ENCODE measurements at regions of chr7 and their contacts with region 1.

Region 1: GRCh38 chr7:116236020-116236630 is 25.8 kb downstream of the TES start:
- DNase-seq: peak; percentile 28 to 81 (median 50)
- ATAC-seq: peak; percentile 79
- H3K4me3 ChIP-seq: no peak overlapping the region
- H3K4me3 Mint-ChIP-seq: no peak overlapping the region
- H3K27ac ChIP-seq: no peak overlapping the region
- H3K27ac Mint-ChIP-seq: peak overlapping the region; percentile 65
- H3K4me1 ChIP-seq: peaks cover 16% of the 10 kb centered on the region
- H3K4me1 Mint-ChIP-seq: peaks cover 94% of the 10 kb centered on the region
- H3K27me3 ChIP-seq: no peaks in the 10 kb centered on the region
- H3K27me3 Mint-ChIP-seq: no peaks in the 10 kb centered on the region
- CTCF ChIP-seq: peak; percentile 82

Region 2: GRCh38 chr7:115952832-115953231 is 283.3 kb before region 1 on chr7:
- CTCF ChIA-PET with region 1: no interaction called
- POLR2A ChIA-PET with region 1: no interaction called
- intact Hi-C with region 1: no loop called
- DNase-seq: no peak
- ATAC-seq: no peak
- H3K4me3 ChIP-seq: no peak overlapping the region
- H3K4me3 Mint-ChIP-seq: no peak overlapping the region
- H3K27ac ChIP-seq: no peak overlapping the region
- H3K27ac Mint-ChIP-seq: no peak overlapping the region
- H3K4me1 ChIP-seq: no peaks in the 10 kb centered on the region
- H3K4me1 Mint-ChIP-seq: no peaks in the 10 kb centered on the region
- H3K27me3 ChIP-seq: no peaks in the 10 kb centered on the region
- H3K27me3 Mint-ChIP-seq: no peaks in the 10 kb centered on the region
- CTCF ChIP-seq: no peak

Region 3: DNA sequence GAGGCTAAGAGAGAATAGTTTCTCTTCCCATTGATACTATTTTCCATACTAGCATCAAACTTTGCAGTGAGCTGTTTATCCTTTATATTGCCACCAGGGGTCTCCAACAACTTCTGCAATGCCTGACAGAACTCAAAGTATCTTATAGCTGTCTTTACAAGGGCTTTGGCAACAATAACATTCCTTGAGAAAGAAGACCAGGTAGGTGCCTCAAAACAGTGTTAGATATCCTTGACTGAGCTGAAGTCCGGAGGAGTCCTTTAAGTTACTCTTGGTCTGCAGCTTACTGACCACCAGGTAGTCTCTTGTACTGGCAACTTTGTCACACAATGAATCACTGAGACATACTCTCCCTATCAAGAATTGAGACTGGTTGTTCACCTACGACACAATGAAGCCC is 55.8 kb before region 1 on chr7:
- CTCF ChIA-PET with region 1: interaction called, 91 read pairs
- POLR2A ChIA-PET with region 1: interaction called, 33 read pairs
- intact Hi-C with region 1: loop called (anchors 1 kb)
- DNase-seq: peak in 8 of 14 experiments; percentile 4 to 78 (median 37)
- ATAC-seq: peak; percentile 91
- H3K4me3 ChIP-seq: no peak overlapping the region
- H3K4me3 Mint-ChIP-seq: no peak overlapping the region
- H3K27ac ChIP-seq: no peak overlapping the region
- H3K27ac Mint-ChIP-seq: no peak overlapping the region
- H3K4me1 ChIP-seq: peaks cover 3% of the 10 kb centered on the region
- H3K4me1 Mint-ChIP-seq: peaks cover 10% of the 10 kb centered on the region
- H3K27me3 ChIP-seq: no peaks in the 10 kb centered on the region
- H3K27me3 Mint-ChIP-seq: no peaks in the 10 kb centered on the region
- CTCF ChIP-seq: peak; percentile 85

Region 4: GRCh38 chr7:116211006-116211912 is 24.9 kb before region 1 on chr7:
- CTCF ChIA-PET with region 1: interaction called, 34 read pairs
- POLR2A ChIA-PET with region 1: interaction called, 117 read pairs
- intact Hi-C with region 1: loop called in 1 of 2 experiments (anchors 2 kb)
- DNase-seq: peak; percentile 64 to 93 (median 76)
- ATAC-seq: peak; percentile 79
- H3K4me3 ChIP-seq: peak overlapping the region; percentile 62
- H3K4me3 Mint-ChIP-seq: peak overlapping the region; percentile 98
- H3K27ac ChIP-seq: peak overlapping the region; percentile 79 to 93
- H3K27ac Mint-ChIP-seq: peak overlapping the region; percentile 99
- H3K4me1 ChIP-seq: peaks cover 22% of the 10 kb centered on the region
- H3K4me1 Mint-ChIP-seq: peaks cover 64% of the 10 kb centered on the region
- H3K27me3 ChIP-seq: no peaks in the 10 kb centered on the region
- H3K27me3 Mint-ChIP-seq: no peaks in the 10 kb centered on the region
- CTCF ChIP-seq: no peak

Region 5: GRCh38 chr7:116224492-116225098 is 11.5 kb before region 1 on chr7:
- CTCF ChIA-PET with region 1: interaction called, 10 read pairs
- POLR2A ChIA-PET with region 1: interaction called, 4 read pairs
- intact Hi-C with region 1: loop called in 1 of 2 experiments (anchors 2 kb)
- DNase-seq: peak in 2 of 14 experiments; percentile 58 to 60
- ATAC-seq: peak; percentile 49
- H3K4me3 ChIP-seq: peak overlapping the region; percentile 19
- H3K4me3 Mint-ChIP-seq: peak overlapping the region; percentile 61
- H3K27ac ChIP-seq: no peak overlapping the region
- H3K27ac Mint-ChIP-seq: peak overlapping the region; percentile 73
- H3K4me1 ChIP-seq: peaks cover 44% of the 10 kb centered on the region
- H3K4me1 Mint-ChIP-seq: peaks cover 92% of the 10 kb centered on the region
- H3K27me3 ChIP-seq: no peaks in the 10 kb centered on the region
- H3K27me3 Mint-ChIP-seq: no peaks in the 10 kb centered on the region
- CTCF ChIP-seq: no peak

Region 6: DNA sequence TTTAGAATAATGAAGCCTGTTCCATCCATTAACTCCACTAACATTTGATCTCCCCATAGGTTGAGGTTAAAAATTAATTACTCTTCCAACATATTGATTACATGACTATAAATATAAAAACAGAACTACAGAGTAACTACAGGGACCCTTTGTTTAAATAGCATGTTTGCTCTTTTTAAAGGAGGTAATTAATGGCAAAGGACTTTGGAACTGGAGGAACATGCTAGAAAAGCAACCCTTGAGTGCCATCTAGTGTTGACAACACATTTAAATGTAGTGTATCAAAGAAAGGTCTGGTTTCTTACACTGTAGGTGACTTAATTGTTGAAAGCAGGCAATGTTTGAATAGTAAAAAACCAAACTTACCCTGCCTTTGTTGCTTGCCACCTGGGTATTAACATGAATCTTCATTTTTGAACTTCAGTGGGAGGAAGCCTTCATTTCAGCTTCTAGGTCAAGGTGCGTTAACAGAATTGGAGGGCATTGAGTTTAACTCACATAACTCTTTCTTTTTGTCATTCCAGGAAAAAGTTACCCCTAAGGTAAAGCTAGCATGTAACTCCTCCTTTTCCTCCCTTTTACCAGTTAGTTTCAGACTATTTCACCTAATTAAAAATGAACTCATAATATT is 573.6 kb after region 1 on chr7:
- CTCF ChIA-PET with region 1: no interaction called
- POLR2A ChIA-PET with region 1: no interaction called
- intact Hi-C with region 1: loop called in 1 of 2 experiments (anchors 5 kb)
- DNase-seq: peak in 4 of 14 experiments; percentile 7 to 62 (median 54)
- ATAC-seq: peak; percentile 48
- H3K4me3 ChIP-seq: no peak overlapping the region
- H3K4me3 Mint-ChIP-seq: no peak overlapping the region
- H3K27ac ChIP-seq: no peak overlapping the region
- H3K27ac Mint-ChIP-seq: no peak overlapping the region
- H3K4me1 ChIP-seq: no peaks in the 10 kb centered on the region
- H3K4me1 Mint-ChIP-seq: no peaks in the 10 kb centered on the region
- H3K27me3 ChIP-seq: no peaks in the 10 kb centered on the region
- H3K27me3 Mint-ChIP-seq: no peaks in the 10 kb centered on the region
- CTCF ChIP-seq: peak; percentile 69